Activated CD4-positive, alpha-beta memory T cell treated with anti-CD3 and anti-CD28 coated beads for 36 hours (primary cell): ENCODE measurements at regions of chr7 and their contacts with region 1.

Region 1: GRCh38 chr7:98280791-98281756 is at the start of gene BRI3:
- DNase-seq: peak; percentile 95
- H3K4me3 Mint-ChIP-seq: peak within 1 kb of the TSS; percentile 79
- H3K27ac Mint-ChIP-seq: peak within 1 kb of the TSS; percentile 66
- H3K4me1 Mint-ChIP-seq: peaks cover 30% of the 10 kb centered on the region
- H3K27me3 Mint-ChIP-seq: no peaks in the 10 kb centered on the region
- total RNA-seq, gene BRI3: 52.0 to 52.9 TPM

Region 2: GRCh38 chr7:98133181-98133580 is 147.9 kb before region 1 on chr7:
- CTCF ChIA-PET with region 1: no interaction called
- POLR2A ChIA-PET with region 1: no interaction called
- intact Hi-C with region 1: loop called (anchors 1 kb)
- DNase-seq: peak; percentile 28
- H3K4me3 Mint-ChIP-seq: no peak overlapping the region
- H3K27ac Mint-ChIP-seq: peak overlapping the region; percentile 43
- H3K4me1 Mint-ChIP-seq: peaks cover 44% of the 10 kb centered on the region
- H3K27me3 Mint-ChIP-seq: no peaks in the 10 kb centered on the region

Region 3: GRCh38 chr7:98234429-98235147 is 46.5 kb before region 1 on chr7:
- CTCF ChIA-PET with region 1: no interaction called
- POLR2A ChIA-PET with region 1: no interaction called
- intact Hi-C with region 1: no loop called
- DNase-seq: no peak
- H3K4me3 Mint-ChIP-seq: no peak overlapping the region
- H3K27ac Mint-ChIP-seq: no peak overlapping the region
- H3K4me1 Mint-ChIP-seq: no peaks in the 10 kb centered on the region
- H3K27me3 Mint-ChIP-seq: no peaks in the 10 kb centered on the region

Region 4: DNA sequence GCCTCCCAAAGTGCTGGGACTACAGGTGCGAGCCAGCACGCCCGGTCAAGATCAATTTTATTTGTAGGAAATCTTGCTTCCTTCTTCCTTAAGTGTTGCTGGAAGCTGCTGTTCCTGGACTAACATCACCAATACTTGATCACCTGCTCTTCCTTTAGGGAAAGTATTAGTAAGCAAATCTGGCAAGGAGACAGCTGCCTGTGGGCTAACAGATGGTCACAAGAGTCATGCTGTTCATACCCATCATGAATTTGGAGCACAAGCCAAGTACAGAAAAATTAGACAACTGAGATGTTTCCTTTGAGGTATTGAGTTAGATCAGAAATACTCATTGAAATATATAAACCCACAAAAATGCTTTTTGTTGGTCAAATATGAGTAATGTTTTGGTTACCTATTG is 91.9 kb after region 1 on chr7:
- CTCF ChIA-PET with region 1: no interaction called
- POLR2A ChIA-PET with region 1: no interaction called
- intact Hi-C with region 1: no loop called
- DNase-seq: no peak
- H3K4me3 Mint-ChIP-seq: no peak overlapping the region
- H3K27ac Mint-ChIP-seq: no peak overlapping the region
- H3K4me1 Mint-ChIP-seq: no peaks in the 10 kb centered on the region
- H3K27me3 Mint-ChIP-seq: no peaks in the 10 kb centered on the region

Region 5: DNA sequence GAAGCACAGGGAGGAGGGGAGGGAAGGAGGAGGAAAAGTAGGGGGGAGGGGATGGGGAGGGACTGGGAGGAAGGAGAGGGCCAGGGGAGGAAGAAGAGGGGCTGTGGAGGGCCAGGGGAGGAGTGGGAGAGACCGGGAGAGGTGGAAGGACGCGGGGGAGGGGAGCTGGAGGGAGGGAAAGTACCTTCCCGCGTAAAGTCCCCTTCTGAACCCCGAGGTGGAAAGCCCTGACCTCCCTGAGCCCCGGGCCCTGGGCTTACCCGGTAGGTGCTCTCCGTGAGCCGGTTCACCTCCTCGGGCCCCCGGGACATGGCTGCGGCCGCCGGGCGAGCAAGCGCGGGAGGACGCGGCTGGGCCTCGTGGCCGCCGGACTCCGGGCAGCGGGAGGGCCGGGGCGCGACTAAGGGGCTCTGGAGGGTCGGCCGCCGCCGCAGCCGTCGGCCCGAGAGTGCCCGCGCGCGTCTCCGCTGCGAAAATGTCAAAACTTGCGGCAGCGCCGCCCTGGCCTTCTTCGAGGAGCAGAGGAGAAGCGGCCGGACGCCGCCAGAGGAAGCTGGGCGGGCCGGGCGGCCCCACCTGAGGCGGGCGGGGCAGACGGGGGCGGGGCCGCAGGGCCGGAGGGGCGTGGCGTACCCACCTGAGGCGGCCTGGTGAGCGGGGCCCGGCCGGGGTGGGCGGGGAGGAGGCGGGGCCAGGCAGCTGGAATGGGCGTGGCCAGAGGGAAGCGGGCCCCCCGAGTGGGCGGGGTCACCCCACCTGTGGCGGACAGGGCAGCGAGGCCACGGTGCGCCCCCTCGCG is 119.7 kb after region 1 on chr7 and contains the start of gene BAIAP2L1:
- CTCF ChIA-PET with region 1: no interaction called
- POLR2A ChIA-PET with region 1: no interaction called
- intact Hi-C with region 1: loop called (anchors 1 kb)
- DNase-seq: peak; percentile 92
- H3K4me3 Mint-ChIP-seq: peak within 1 kb of the TSS; percentile 50
- H3K27ac Mint-ChIP-seq: no peak within 1 kb of the TSS
- H3K4me1 Mint-ChIP-seq: peaks cover 3% of the 10 kb centered on the region
- H3K27me3 Mint-ChIP-seq: peaks cover 13% of the 10 kb centered on the region
- total RNA-seq, gene BAIAP2L1: 3.2 to 4.5 TPM

Region 6: DNA sequence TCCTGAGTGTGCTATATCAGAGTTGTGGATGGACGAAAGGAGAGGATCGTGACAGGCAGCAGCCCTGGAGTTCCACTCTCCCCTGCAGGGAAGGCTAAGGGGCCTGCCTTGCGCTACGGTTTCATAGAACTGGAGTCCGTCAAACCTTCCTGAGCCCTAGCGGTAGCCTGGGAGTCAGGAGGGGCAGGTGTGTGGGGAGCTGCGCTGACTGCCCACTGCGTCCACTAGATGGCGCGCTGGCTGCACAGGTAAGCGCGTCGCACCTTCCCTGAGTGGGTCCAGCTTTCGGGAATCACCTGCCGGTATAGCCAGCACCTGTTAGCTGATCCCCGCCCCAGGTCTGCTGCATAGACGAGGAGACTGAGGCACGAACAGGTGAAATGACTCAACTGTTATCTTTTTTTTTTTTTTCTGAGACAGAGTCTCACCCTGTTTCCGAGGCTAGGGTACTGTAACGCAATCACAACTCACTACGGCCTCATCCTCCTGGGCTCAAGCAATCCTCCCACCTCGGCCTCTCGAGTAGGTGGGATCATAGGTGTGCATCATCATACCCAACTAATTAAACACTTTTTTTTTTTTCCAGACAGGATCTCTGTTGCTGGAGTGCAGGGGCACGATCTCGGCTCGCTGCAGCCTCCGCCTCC is 140.0 kb after region 1 on chr7:
- CTCF ChIA-PET with region 1: no interaction called
- POLR2A ChIA-PET with region 1: no interaction called
- intact Hi-C with region 1: loop called (anchors 5 kb)
- DNase-seq: peak; percentile 71
- H3K4me3 Mint-ChIP-seq: no peak overlapping the region
- H3K27ac Mint-ChIP-seq: no peak overlapping the region
- H3K4me1 Mint-ChIP-seq: peaks cover 7% of the 10 kb centered on the region
- H3K27me3 Mint-ChIP-seq: peaks cover 5% of the 10 kb centered on the region

Region 7: GRCh38 chr7:98459529-98459928 is 178.5 kb after region 1 on chr7:
- CTCF ChIA-PET with region 1: no interaction called
- POLR2A ChIA-PET with region 1: no interaction called
- intact Hi-C with region 1: no loop called
- DNase-seq: no peak
- H3K4me3 Mint-ChIP-seq: no peak overlapping the region
- H3K27ac Mint-ChIP-seq: no peak overlapping the region
- H3K4me1 Mint-ChIP-seq: no peaks in the 10 kb centered on the region
- H3K27me3 Mint-ChIP-seq: no peaks in the 10 kb centered on the region